ENCODE measurements at regions of chr20 and their contacts with region 1.

Region 1: DNA sequence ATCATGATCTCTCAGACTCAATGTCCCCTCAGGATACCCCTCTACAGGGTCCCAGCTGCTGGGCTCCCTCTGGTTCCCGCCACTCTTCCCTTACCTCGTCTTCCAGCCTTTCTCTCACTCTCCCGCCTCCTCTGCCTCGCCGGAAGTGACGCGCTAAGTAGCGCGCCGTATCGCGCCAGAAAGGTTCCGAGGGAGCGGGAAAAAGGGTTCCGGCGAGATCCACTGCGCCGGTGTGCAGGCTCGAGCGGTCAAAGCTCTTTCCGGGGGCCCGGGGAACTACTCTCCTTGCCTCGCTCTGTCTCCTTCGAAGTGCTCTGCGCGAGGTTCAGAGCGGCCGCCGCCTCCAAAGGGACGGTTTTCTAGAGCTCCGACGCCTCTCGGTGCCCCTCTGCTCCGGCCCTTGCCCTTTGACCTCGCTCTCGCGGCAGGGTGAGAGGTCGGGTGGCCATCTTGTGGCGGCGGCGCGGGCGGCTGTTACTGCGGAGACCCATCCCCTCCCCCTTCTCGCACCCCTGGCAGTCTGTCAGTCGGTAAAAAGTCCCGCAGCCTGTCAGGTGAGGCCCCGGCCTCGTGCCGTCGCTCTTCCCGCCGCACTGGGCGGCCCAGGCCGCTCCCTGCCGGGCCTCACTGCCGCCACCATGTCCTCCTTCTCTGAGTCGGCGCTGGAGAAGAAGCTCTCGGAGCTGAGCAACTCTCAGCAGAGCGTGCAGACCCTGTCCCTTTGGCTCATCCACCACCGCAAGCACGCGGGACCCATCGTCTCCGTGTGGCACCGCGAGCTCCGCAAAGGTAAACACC is at the starts of genes RPRD1B and TTI1:
- DNase-seq: peak; percentile 84 to 92 (median 90)
- ATAC-seq: peak; percentile 92
- H3K4me3 ChIP-seq: peak within 1 kb of the TSS; percentile 94
- H3K4me3 Mint-ChIP-seq: peak within 1 kb of the TSS; percentile 92 to 99 (median 96)
- H3K27ac ChIP-seq: peak within 1 kb of the TSS; percentile 93
- H3K27ac Mint-ChIP-seq: peak within 1 kb of the TSS; percentile 91 to 100 (median 99)
- H3K4me1 ChIP-seq: peaks cover 35 to 41% of the 10 kb centered on the region in 2 donors
- H3K4me1 Mint-ChIP-seq: peaks cover 54 to 87% (median 72%) of the 10 kb centered on the region in 7 donors
- H3K27me3 ChIP-seq: no peaks in the 10 kb centered on the region
- H3K27me3 Mint-ChIP-seq: peaks cover 0 to 4% (median 0%) of the 10 kb centered on the region in 5 donors
- total RNA-seq, gene RPRD1B: 43.5 to 49.1 (median 45.5) TPM
- total RNA-seq, gene TTI1: 15.9 to 29.8 (median 25.3) TPM

Region 2: DNA sequence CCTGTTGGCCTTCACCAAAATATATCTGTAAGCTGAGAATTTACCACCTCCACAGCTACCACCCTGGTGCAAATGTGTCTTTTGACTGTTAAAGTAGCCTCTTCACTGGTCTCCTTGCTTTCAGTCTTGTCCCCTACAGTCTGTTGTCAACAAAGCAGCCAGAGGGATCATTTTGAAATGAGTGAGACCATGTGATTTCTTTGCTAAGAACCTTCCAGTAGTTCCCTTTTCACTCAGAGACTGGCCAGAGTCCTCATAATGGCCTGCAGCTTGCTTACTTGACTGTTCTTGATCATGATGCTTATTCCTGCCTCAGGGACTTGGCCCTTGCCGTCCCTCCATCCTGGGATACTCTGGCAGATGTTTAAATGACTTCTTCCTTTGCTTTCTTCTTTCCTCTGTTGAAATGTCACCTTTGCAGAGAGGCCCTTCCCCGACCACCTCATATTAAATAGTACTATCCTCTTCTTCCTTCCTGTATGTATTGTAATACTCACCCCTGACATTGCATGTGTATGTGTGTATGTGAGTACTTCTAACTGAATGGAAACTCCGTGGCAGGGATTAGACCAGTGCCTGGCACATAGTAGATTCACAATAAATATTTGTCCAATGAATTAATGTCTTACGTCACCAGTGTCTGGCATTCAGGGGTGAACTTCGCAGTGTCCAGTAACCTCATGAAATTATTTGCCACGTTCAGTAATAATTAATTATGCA is 739.1 kb before region 1 on chr20:
- CTCF ChIA-PET with region 1: no interaction called
- POLR2A ChIA-PET with region 1: no interaction called
- intact Hi-C with region 1: loop called in 1 of 2 experiments (anchors 1 kb)
- DNase-seq: no peak
- ATAC-seq: peak; percentile 52
- H3K4me3 ChIP-seq: no peak overlapping the region
- H3K4me3 Mint-ChIP-seq: peak overlapping the region in 1 of 10 donors; percentile 3
- H3K27ac ChIP-seq: no peak overlapping the region
- H3K27ac Mint-ChIP-seq: peak overlapping the region in 1 of 9 donors; percentile 39
- H3K4me1 ChIP-seq: peaks cover 13 to 14% of the 10 kb centered on the region in 2 donors
- H3K4me1 Mint-ChIP-seq: peaks cover 34 to 69% (median 62%) of the 10 kb centered on the region in 7 donors
- H3K27me3 ChIP-seq: no peaks in the 10 kb centered on the region
- H3K27me3 Mint-ChIP-seq: no peaks in the 10 kb centered on the region

Region 3: GRCh38 chr20:37693635-37694626 is 339.6 kb before region 1 on chr20 and contains the start of gene CTNNBL1:
- CTCF ChIA-PET with region 1: no interaction called
- POLR2A ChIA-PET with region 1: interaction called, 4 read pairs
- intact Hi-C with region 1: loop called (anchors 1 to 5 kb)
- DNase-seq: peak; percentile 83 to 94 (median 93)
- ATAC-seq: peak; percentile 99
- H3K4me3 ChIP-seq: peak within 1 kb of the TSS; percentile 80
- H3K4me3 Mint-ChIP-seq: peak within 1 kb of the TSS; percentile 96 to 100 (median 99)
- H3K27ac ChIP-seq: peak within 1 kb of the TSS; percentile 76
- H3K27ac Mint-ChIP-seq: peak within 1 kb of the TSS; percentile 87 to 96 (median 93)
- H3K4me1 ChIP-seq: peaks cover 9 to 20% of the 10 kb centered on the region in 2 donors
- H3K4me1 Mint-ChIP-seq: peaks cover 19 to 53% (median 42%) of the 10 kb centered on the region in 7 donors
- H3K27me3 ChIP-seq: no peaks in the 10 kb centered on the region
- H3K27me3 Mint-ChIP-seq: peaks cover 12 to 22% (median 16%) of the 10 kb centered on the region in 5 donors
- total RNA-seq, gene CTNNBL1: 41.7 to 72.9 (median 49.1) TPM

Region 4: GRCh38 chr20:38057351-38057972 is 24.0 kb after region 1 on chr20:
- CTCF ChIA-PET with region 1: interaction called, 6 read pairs
- POLR2A ChIA-PET with region 1: interaction called, 3 read pairs
- intact Hi-C with region 1: loop called in 1 of 2 experiments (anchors 1 kb)
- DNase-seq: peak; percentile 33 to 69 (median 60)
- ATAC-seq: peak; percentile 98
- H3K4me3 ChIP-seq: no peak overlapping the region
- H3K4me3 Mint-ChIP-seq: peak overlapping the region in 1 of 10 donors; percentile 52
- H3K27ac ChIP-seq: no peak overlapping the region
- H3K27ac Mint-ChIP-seq: peak overlapping the region in 8 of 9 donors; percentile 14 to 82 (median 30)
- H3K4me1 ChIP-seq: no peaks in the 10 kb centered on the region
- H3K4me1 Mint-ChIP-seq: peaks cover 5 to 37% (median 31%) of the 10 kb centered on the region in 7 donors
- H3K27me3 ChIP-seq: no peaks in the 10 kb centered on the region
- H3K27me3 Mint-ChIP-seq: no peaks in the 10 kb centered on the region

Region 5: GRCh38 chr20:38067717-38068365 is 34.3 kb after region 1 on chr20:
- CTCF ChIA-PET with region 1: no interaction called
- POLR2A ChIA-PET with region 1: no interaction called
- intact Hi-C with region 1: no loop called
- DNase-seq: no peak
- ATAC-seq: no peak
- H3K4me3 ChIP-seq: no peak overlapping the region
- H3K4me3 Mint-ChIP-seq: no peak overlapping the region
- H3K27ac ChIP-seq: no peak overlapping the region
- H3K27ac Mint-ChIP-seq: no peak overlapping the region
- H3K4me1 ChIP-seq: no peaks in the 10 kb centered on the region
- H3K4me1 Mint-ChIP-seq: peaks cover 0 to 14% (median 5%) of the 10 kb centered on the region in 7 donors
- H3K27me3 ChIP-seq: no peaks in the 10 kb centered on the region
- H3K27me3 Mint-ChIP-seq: no peaks in the 10 kb centered on the region

Region 6: DNA sequence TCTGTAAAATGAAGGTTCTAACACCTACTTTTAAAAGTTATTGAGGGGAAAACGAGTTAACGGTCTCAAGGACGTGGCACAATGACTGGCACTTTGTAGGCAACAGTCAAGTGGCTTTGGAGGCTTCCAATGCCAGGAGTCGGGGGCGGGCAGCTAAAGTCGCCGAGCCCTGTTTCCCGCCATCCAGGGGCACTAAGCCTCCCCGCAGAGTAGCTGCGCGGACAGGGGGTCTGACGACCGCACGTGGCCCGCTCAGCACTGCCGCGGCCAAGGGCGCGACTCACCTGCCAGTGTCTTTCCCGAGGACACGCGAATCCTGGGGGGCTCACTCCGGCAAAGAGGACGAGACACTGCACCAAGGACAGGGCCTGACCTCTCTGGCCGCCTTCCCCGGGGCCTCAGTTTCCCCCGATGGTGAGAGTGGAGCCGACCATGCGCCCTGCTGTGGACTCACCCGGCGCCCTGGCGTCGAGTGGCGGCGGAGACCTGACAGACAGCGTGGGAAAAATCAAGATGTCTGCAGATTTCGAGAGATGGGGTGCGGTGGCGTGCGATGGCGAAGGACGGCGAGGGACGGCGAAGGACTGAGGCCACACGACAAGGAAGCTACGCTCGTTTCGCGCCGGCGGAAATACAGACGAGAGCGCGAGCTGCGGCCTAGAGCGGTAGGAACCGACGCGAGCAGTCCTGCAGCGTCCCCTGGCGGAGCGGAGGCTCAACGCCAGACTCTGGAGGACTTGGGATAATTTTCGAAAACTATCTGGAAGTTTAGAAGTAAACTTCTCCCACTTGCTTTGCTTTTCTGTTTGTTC is 401.4 kb after region 1 on chr20 and contains the start of gene SNHG17:
- CTCF ChIA-PET with region 1: no interaction called
- POLR2A ChIA-PET with region 1: interaction called, 4 read pairs
- intact Hi-C with region 1: loop called (anchors 1 kb)
- DNase-seq: peak; percentile 80 to 89 (median 87)
- ATAC-seq: peak; percentile 99
- H3K4me3 ChIP-seq: peak within 1 kb of the TSS; percentile 62
- H3K4me3 Mint-ChIP-seq: peak within 1 kb of the TSS; percentile 87 to 99 (median 94)
- H3K27ac ChIP-seq: peak within 1 kb of the TSS; percentile 81
- H3K27ac Mint-ChIP-seq: peak within 1 kb of the TSS; percentile 91 to 98 (median 95)
- H3K4me1 ChIP-seq: peaks cover 6 to 8% of the 10 kb centered on the region in 2 donors
- H3K4me1 Mint-ChIP-seq: peaks cover 20 to 41% (median 35%) of the 10 kb centered on the region in 7 donors
- H3K27me3 ChIP-seq: no peaks in the 10 kb centered on the region
- H3K27me3 Mint-ChIP-seq: peaks cover 0 to 9% (median 5%) of the 10 kb centered on the region in 5 donors
- total RNA-seq, gene SNHG17: 43.9 to 102 (median 52.4) TPM

Region 7: DNA sequence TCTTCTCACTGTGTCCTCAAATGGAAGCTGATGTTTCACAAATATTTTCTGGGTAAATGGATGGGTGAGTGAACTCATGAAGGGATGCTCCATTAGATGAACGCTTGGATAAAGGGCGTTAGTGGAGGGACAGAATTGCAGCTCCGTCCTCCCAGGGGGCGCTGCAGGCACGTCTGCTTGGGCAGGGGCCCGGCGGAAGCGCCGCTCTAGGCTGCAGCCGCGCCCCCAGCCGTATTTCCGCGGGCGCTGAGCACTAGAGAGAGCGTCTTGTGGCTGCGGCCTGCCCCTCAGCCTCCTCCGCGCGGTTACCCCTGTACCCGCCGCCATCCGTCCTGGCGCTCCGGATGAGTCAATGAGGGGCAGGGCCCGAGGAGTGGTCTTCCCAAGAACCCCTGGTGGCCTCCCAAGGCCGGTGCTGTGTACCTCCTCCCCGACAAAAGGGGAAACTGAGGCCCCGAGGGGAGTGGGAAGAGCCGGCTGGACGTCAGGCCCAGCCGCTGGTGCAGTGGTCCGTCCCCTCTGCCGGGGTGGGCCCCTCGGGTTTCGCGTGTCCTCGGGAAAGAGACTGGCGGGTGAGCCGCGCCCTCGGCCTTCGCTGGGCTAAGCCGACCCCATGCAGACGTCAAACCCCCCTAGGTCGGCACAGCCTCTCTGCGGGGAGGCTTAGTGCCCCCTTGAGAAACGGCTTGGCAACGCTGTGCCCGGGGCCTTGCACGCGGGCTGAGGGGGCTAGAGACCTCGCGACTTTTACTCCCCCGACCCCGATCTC is 413.1 kb after region 1 on chr20:
- CTCF ChIA-PET with region 1: no interaction called
- POLR2A ChIA-PET with region 1: no interaction called
- intact Hi-C with region 1: loop called in 1 of 2 experiments (anchors 5 kb)
- DNase-seq: peak; percentile 83 to 96 (median 90)
- ATAC-seq: peak; percentile 100
- H3K4me3 ChIP-seq: peak overlapping the region; percentile 94
- H3K4me3 Mint-ChIP-seq: peak overlapping the region; percentile 82 to 94 (median 86)
- H3K27ac ChIP-seq: peak overlapping the region; percentile 81
- H3K27ac Mint-ChIP-seq: peak overlapping the region; percentile 83 to 96 (median 90)
- H3K4me1 ChIP-seq: peaks cover 10 to 11% of the 10 kb centered on the region in 2 donors
- H3K4me1 Mint-ChIP-seq: peaks cover 7 to 33% (median 24%) of the 10 kb centered on the region in 7 donors
- H3K27me3 ChIP-seq: no peaks in the 10 kb centered on the region
- H3K27me3 Mint-ChIP-seq: peaks cover 0 to 12% (median 0%) of the 10 kb centered on the region in 5 donors

Measured in naive thymus-derived CD4-positive, alpha-beta T cell (primary cell).